ENCODE measurements at regions of chr12 and their contacts with region 1.

Region 1: GRCh38 chr12:2884810-2885209 is 5.9 kb upstream of the TULP3 start:
- DNase-seq: no peak
- ATAC-seq: peak; percentile 16; the same call in 2 of the 3 replicates
- H3K4me3 ChIP-seq: no peak overlapping the region
- H3K27ac ChIP-seq: no peak overlapping the region
- H3K4me1 ChIP-seq: peaks cover 45% of the 10 kb centered on the region
- H3K27me3 ChIP-seq: no peaks in the 10 kb centered on the region; a peak in 1 of 5 replicates
- CTCF ChIP-seq: no peak
- EP300 ChIP-seq: no peak
- POLR2A ChIP-seq: no peak
- RAD21 ChIP-seq: no peak

Region 2: DNA sequence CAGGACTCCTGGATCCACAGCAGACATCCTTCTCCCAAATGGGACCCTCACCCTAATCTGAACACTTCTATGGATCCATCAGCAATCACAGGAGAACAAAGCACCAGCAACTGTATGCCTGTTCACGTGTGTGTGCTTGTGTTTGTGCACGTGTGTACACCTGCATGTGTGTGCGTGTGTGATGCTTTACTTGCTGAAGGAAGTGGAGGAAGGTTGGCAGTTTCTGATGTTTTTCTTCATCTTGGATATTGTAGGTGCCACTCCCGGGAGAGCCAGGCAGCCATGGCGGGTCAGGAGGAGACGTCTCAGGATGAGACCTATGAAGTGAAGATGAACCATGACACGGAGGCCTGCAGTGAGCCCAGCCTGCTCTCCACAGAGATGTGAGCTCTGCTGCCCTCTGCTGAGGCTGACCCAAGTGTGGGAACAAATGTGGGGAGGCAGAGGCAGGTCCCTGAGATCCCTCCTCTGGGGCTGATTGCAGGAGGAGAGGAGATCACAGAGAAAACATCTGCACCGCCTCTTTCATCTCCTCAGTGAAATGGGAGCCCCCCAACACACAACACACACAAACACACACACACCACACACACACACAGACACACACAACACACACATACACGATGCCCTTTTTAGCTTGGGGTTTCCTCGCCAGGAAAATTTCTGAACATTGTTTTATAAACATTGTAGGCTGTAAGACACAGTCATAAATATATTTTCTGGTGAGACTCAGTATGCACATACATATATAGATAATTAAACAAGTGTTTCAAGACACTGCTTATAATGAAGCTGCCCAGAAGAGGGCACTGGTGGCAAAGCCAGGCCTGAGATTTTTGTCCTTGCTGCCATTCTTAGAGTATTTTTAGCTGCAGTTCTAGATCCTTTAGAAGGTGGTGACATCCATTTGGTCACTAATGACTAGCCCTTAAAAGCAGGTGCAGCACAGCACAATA is 202.2 kb before region 1 on chr12:
- CTCF ChIA-PET with region 1: no interaction called
- POLR2A ChIA-PET with region 1: no interaction called
- in situ Hi-C with region 1: no loop called
- intact Hi-C with region 1: no loop called
- DNase-seq: peak; percentile 59
- ATAC-seq: peak; percentile 80
- H3K4me3 ChIP-seq: no peak overlapping the region
- H3K27ac ChIP-seq: no peak overlapping the region
- H3K4me1 ChIP-seq: no peaks in the 10 kb centered on the region
- H3K27me3 ChIP-seq: peaks cover 4 to 22% of the 10 kb centered on the region in 2 experiments; a peak in 4 of 5 replicates
- CTCF ChIP-seq: peak; percentile 69
- EP300 ChIP-seq: no peak
- POLR2A ChIP-seq: no peak
- RAD21 ChIP-seq: no peak

Region 3: DNA sequence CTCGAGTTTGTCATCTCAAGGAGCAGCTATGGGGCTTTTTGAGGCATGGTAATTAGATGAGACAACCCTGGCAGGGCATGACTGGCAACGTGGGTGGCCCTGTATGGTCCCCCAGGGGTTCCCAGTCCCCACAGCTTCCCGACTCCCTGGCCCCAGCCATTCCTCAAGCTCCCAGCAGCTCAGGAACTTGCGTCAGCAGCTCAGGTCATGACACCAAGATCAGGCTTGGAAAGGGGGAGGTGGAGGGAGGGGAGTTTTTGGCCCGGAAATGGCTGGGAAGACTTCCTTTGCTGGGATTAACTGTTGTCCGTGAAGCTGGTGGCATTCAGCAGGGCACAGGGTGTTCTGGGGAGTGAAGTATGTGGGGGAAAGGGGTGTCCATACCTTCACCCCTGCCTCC is 39.5 kb before region 1 on chr12:
- CTCF ChIA-PET with region 1: no interaction called
- POLR2A ChIA-PET with region 1: interaction called, 4 read pairs
- in situ Hi-C with region 1: no loop called
- intact Hi-C with region 1: loop called (anchors 5 kb)
- DNase-seq: no peak
- ATAC-seq: no peak
- H3K4me3 ChIP-seq: no peak overlapping the region
- H3K27ac ChIP-seq: no peak overlapping the region
- H3K4me1 ChIP-seq: peaks cover 42% of the 10 kb centered on the region
- H3K27me3 ChIP-seq: no peaks in the 10 kb centered on the region; a peak in 1 of 5 replicates
- CTCF ChIP-seq: no peak
- EP300 ChIP-seq: no peak
- POLR2A ChIP-seq: no peak
- RAD21 ChIP-seq: no peak

Region 4: DNA sequence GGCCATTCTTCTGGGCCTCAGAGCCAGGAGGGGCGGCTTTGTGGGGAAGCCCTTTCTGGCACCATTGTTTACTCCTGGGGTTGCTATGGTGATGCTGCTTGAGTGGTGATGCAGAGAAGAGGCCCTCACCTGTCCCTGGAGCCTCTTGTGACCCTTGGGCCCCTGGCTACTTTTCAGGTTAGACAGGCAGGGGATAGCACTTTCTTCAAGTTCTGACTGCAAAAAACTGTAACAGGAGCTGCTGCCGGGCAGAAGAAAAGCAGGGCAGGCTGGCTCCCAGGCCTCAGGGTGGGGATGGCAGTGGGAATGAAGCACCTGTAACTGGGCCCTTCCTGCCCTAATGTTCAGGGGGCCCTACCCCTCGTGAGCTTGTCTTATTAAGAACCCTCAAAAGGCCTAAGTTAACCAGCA is 27.8 kb before region 1 on chr12 and contains the start of gene TEX52:
- CTCF ChIA-PET with region 1: no interaction called
- POLR2A ChIA-PET with region 1: no interaction called
- in situ Hi-C with region 1: no loop called
- intact Hi-C with region 1: no loop called
- DNase-seq: peak; percentile 22
- ATAC-seq: peak; percentile 43
- H3K4me3 ChIP-seq: no peak within 1 kb of the TSS
- H3K27ac ChIP-seq: peak within 1 kb of the TSS; percentile 41
- H3K4me1 ChIP-seq: peaks cover 12% of the 10 kb centered on the region
- H3K27me3 ChIP-seq: no peaks in the 10 kb centered on the region
- CTCF ChIP-seq: no peak
- EP300 ChIP-seq: no peak
- POLR2A ChIP-seq: 0 out of 4 replicates have a peak, but pooled peaks of 1 of the 2 experiments have one; percentile 7
- RAD21 ChIP-seq: no peak
- total RNA-seq, gene TEX52: 0.17 TPM in 1 of 2 replicates, not detected in the other

Region 5: GRCh38 chr12:2944401-2945047 is 59.7 kb after region 1 on chr12:
- CTCF ChIA-PET with region 1: interaction called, 16 read pairs
- POLR2A ChIA-PET with region 1: no interaction called
- in situ Hi-C with region 1: no loop called
- intact Hi-C with region 1: loop called (anchors 1 kb)
- DNase-seq: peak; percentile 46
- ATAC-seq: peak; percentile 82
- H3K4me3 ChIP-seq: no peak overlapping the region
- H3K27ac ChIP-seq: no peak overlapping the region
- H3K4me1 ChIP-seq: peaks cover 51% of the 10 kb centered on the region
- H3K27me3 ChIP-seq: no peaks in the 10 kb centered on the region
- CTCF ChIP-seq: peak; percentile 96
- EP300 ChIP-seq: no peak
- POLR2A ChIP-seq: no peak
- RAD21 ChIP-seq: peak; percentile 80

Region 6: GRCh38 chr12:3034067-3034750 is 149.4 kb after region 1 on chr12:
- CTCF ChIA-PET with region 1: interaction called, 9 read pairs
- POLR2A ChIA-PET with region 1: interaction called, 4 read pairs
- in situ Hi-C with region 1: loop called (anchors 10 kb)
- intact Hi-C with region 1: loop called (anchors 2 kb)
- DNase-seq: peak; percentile 55
- ATAC-seq: peak; percentile 93
- H3K4me3 ChIP-seq: no peak overlapping the region
- H3K27ac ChIP-seq: no peak overlapping the region
- H3K4me1 ChIP-seq: no peaks in the 10 kb centered on the region
- H3K27me3 ChIP-seq: no peaks in the 10 kb centered on the region
- CTCF ChIP-seq: peak; percentile 83
- EP300 ChIP-seq: no peak; a peak in 1 of 4 replicates
- POLR2A ChIP-seq: no peak
- RAD21 ChIP-seq: peak; percentile 61